Esophagus squamous epithelium (tissue), 5 donors: ENCODE measurements at regions of chr1 and their contacts with region 1.

Region 1: DNA sequence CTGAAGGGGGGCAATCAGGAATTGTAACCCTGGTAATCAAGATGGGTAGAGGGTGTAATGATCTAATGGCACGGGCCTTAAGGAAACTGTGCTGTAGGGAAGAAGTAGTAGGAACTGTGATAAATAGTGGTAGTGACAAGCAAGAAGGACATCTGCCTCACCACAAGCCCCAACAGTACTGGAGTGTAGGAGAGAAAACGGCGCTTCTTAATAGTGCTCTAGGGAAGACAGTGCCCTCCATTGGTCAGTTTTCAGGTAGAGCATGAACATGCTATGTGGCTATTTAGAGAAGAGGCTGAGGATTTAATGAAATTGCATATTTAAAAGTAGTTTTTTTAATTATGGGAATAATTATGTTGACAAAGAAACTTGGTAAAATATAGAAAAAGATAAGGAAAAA is 32.2 kb downstream of the SLC30A7 start:
- DNase-seq: no peak
- H3K4me3 ChIP-seq: no peak overlapping the region
- H3K27ac ChIP-seq: no peak overlapping the region
- H3K4me1 ChIP-seq: peaks cover 0 to 12% (median 0%) of the 10 kb centered on the region in 3 donors
- H3K27me3 ChIP-seq: no peaks in the 10 kb centered on the region
- CTCF ChIP-seq: no peak
- POLR2A ChIP-seq: no peak

Region 2: GRCh38 chr1:101008229-101008834 is 80.2 kb after region 1 on chr1:
- intact Hi-C with region 1: no loop called
- DNase-seq: no peak
- H3K4me3 ChIP-seq: no peak overlapping the region
- H3K27ac ChIP-seq: no peak overlapping the region
- H3K4me1 ChIP-seq: peaks cover 4 to 21% (median 13%) of the 10 kb centered on the region in 3 donors
- H3K27me3 ChIP-seq: no peaks in the 10 kb centered on the region
- CTCF ChIP-seq: no peak
- POLR2A ChIP-seq: no peak

Region 3: GRCh38 chr1:101282314-101283038 is 354.3 kb after region 1 on chr1:
- intact Hi-C with region 1: loop called (anchors 5 kb)
- DNase-seq: no peak
- H3K4me3 ChIP-seq: no peak overlapping the region
- H3K27ac ChIP-seq: no peak overlapping the region
- H3K4me1 ChIP-seq: no peaks in the 10 kb centered on the region
- H3K27me3 ChIP-seq: peaks cover 0 to 10% (median 0%) of the 10 kb centered on the region in 4 donors
- CTCF ChIP-seq: no peak
- POLR2A ChIP-seq: no peak